ENCODE measurements at regions of chr7 and their contacts with region 1.

Region 1: DNA sequence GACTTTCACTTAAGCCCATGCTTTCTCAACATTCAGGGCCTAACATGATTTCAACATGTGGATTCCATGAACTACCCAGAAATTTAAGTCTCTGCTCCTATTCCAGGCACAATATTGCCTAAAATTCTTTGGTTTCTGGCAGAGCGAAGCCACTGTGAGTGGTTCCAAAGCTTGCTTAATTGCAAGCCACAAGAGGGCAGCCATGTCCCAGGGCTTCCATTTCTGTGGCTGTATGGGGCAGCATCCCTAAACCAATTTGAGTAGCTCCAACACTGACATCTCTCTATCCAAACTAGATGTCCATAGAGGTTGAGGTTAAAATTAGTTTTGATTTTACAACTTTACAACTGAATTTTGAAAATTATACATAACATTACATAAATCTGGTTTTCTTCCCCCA is 56.3 kb upstream of the MDFIC start:
- DNase-seq: peak; percentile 58
- ATAC-seq: peak; percentile 95
- H3K4me3 Mint-ChIP-seq: no peak overlapping the region
- H3K27ac Mint-ChIP-seq: no peak overlapping the region
- H3K4me1 Mint-ChIP-seq: no peaks in the 10 kb centered on the region
- H3K27me3 Mint-ChIP-seq: no peaks in the 10 kb centered on the region
- CTCF ChIP-seq: 0 out of 2 replicates have a peak, but pooled peaks have one; percentile 41

Region 2: GRCh38 chr7:114885836-114886235 is 20.3 kb after region 1 on chr7:
- CTCF ChIA-PET with region 1: no interaction called
- POLR2A ChIA-PET with region 1: no interaction called
- DNase-seq: no peak
- ATAC-seq: no peak
- H3K4me3 Mint-ChIP-seq: no peak overlapping the region
- H3K27ac Mint-ChIP-seq: no peak overlapping the region
- H3K4me1 Mint-ChIP-seq: no peaks in the 10 kb centered on the region
- H3K27me3 Mint-ChIP-seq: no peaks in the 10 kb centered on the region
- CTCF ChIP-seq: no peak

Region 3: DNA sequence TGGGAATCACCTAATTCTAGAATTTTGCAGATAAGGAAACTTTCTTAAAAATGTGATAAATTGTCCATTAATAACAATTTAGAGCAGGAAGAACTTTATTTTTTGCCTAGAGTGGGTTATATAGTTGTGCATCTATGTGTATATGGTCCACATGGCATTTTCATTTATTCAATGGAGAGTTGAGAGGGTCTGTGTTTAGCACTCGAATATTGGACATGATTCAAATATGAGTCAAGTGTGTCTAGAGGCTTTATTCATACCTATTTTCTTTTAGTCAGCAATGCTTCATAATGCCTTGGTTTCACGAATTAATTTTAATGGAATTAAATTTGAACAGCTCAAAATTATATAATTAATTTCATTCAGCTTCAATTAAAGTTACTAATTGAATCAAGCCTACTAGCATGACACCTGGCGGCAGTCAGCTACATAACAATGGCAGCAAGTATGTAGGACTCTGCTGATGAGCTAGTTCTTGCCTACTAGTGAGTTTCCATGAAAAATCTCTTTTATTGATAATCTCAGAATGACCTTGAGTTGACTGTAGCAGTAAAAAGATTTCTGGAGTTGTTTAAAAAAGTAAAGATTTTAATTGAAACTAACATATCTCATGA is 74.0 kb after region 1 on chr7:
- CTCF ChIA-PET with region 1: interaction called, 10 read pairs
- POLR2A ChIA-PET with region 1: no interaction called
- DNase-seq: no peak
- ATAC-seq: 0 out of 2 replicates have a peak, but pooled peaks have one; percentile 34
- H3K4me3 Mint-ChIP-seq: no peak overlapping the region
- H3K27ac Mint-ChIP-seq: no peak overlapping the region
- H3K4me1 Mint-ChIP-seq: peaks cover 16% of the 10 kb centered on the region
- H3K27me3 Mint-ChIP-seq: no peaks in the 10 kb centered on the region
- CTCF ChIP-seq: no peak

Region 4: DNA sequence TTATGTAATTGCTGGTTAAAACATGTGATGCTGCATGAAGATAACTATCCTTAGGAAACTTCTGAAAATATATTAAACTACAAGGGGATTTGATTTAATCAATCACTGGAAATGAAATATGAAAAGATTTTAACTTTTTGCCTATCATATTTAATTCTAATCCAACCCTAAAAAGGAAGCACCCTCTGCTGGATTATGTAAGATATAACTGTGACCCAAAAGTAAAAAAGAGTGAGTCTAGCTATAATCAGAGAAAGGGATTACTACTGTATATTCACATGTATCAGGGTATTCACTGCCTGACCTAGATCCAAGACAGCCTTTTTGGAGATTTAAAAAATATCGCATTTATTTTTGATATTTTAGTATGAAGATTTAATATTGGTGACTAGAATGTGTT is 351.8 kb after region 1 on chr7:
- CTCF ChIA-PET with region 1: interaction called, 18 read pairs
- POLR2A ChIA-PET with region 1: no interaction called
- DNase-seq: no peak
- ATAC-seq: no peak
- H3K4me3 Mint-ChIP-seq: no peak overlapping the region
- H3K27ac Mint-ChIP-seq: no peak overlapping the region
- H3K4me1 Mint-ChIP-seq: peaks cover 6% of the 10 kb centered on the region; the same call in 1 of the 2 replicates
- H3K27me3 Mint-ChIP-seq: peaks cover 83% of the 10 kb centered on the region
- CTCF ChIP-seq: no peak

Measured in WTC11 (cell line).